ENCODE measurements at regions of chrX and their contacts with region 1.

Region 1: DNA sequence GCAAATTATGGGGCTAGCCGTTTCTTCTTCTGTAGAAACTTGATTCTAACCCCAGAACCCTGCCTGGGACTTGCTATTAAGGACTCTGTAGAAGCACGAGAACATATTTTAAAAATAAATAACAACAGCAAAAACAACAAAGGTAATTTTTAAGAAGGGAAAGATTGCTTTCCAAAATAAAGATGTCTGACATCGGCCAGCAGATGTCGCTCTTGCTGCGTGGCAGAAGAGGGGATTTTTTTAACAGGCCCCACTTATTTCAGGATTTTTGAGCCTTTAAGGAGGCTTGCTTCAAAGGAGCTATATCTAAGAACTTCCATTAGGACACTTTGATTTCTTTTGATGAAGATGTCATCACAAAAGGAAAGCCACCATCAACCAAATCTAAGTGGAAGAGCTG is 62.8 kb upstream of the EGFL6 start:
- DNase-seq: peak; percentile 31 to 55
- ATAC-seq: no peak
- H3K4me3 ChIP-seq: no peak overlapping the region
- H3K27ac ChIP-seq: peak overlapping the region in 1 of 2 experiments; percentile 54; a peak in 2 of 6 replicates
- H3K4me1 ChIP-seq: no peaks in the 10 kb centered on the region
- CTCF ChIP-seq: peak; percentile 84
- EP300 ChIP-seq: no peak
- POLR2A ChIP-seq: no peak
- RAD21 ChIP-seq: peak; percentile 89 to 90

Region 2: GRCh38 chrX:13518126-13518525 is 11.6 kb after region 1 on chrX:
- CTCF ChIA-PET with region 1: interaction called, 10 read pairs
- POLR2A ChIA-PET with region 1: no interaction called
- DNase-seq: no peak
- ATAC-seq: no peak
- H3K4me3 ChIP-seq: no peak overlapping the region
- H3K27ac ChIP-seq: no peak overlapping the region
- H3K4me1 ChIP-seq: no peaks in the 10 kb centered on the region
- CTCF ChIP-seq: no peak
- EP300 ChIP-seq: no peak
- POLR2A ChIP-seq: no peak
- RAD21 ChIP-seq: no peak

Region 3: GRCh38 chrX:13646154-13646549 is 139.6 kb after region 1 on chrX:
- CTCF ChIA-PET with region 1: interaction called, 39 read pairs
- POLR2A ChIA-PET with region 1: interaction called, 5 read pairs
- DNase-seq: peak; percentile 24 to 69
- ATAC-seq: peak; percentile 93 to 94
- H3K4me3 ChIP-seq: no peak overlapping the region
- H3K27ac ChIP-seq: peak overlapping the region; percentile 72 to 80
- H3K4me1 ChIP-seq: peaks cover 4% of the 10 kb centered on the region; the same call in 2 of the 3 replicates
- CTCF ChIP-seq: peak; percentile 68
- EP300 ChIP-seq: no peak
- POLR2A ChIP-seq: no peak
- RAD21 ChIP-seq: peak; percentile 75 to 81

Region 4: GRCh38 chrX:14029425-14030173 is 523.0 kb after region 1 on chrX and contains the start of gene GEMIN8:
- CTCF ChIA-PET with region 1: interaction called, 17 read pairs
- POLR2A ChIA-PET with region 1: interaction called, 6 read pairs
- DNase-seq: peak; percentile 59 to 95
- ATAC-seq: peak; percentile 95 to 96
- H3K4me3 ChIP-seq: peak within 1 kb of the TSS; percentile 87
- H3K27ac ChIP-seq: peak within 1 kb of the TSS; percentile 94 to 97
- H3K4me1 ChIP-seq: peaks cover 25% of the 10 kb centered on the region
- CTCF ChIP-seq: no peak
- EP300 ChIP-seq: no peak
- POLR2A ChIP-seq: peak; percentile 75
- RAD21 ChIP-seq: peak in 1 of 2 experiments; percentile 21; a peak in 1 of 5 replicates
- polyA plus RNA-seq, gene GEMIN8: 21.8 and 27.5 TPM in 2 replicates